HEK293 (cell line): ENCODE measurements at regions of chr6 and their contacts with region 1.

Region 1: DNA sequence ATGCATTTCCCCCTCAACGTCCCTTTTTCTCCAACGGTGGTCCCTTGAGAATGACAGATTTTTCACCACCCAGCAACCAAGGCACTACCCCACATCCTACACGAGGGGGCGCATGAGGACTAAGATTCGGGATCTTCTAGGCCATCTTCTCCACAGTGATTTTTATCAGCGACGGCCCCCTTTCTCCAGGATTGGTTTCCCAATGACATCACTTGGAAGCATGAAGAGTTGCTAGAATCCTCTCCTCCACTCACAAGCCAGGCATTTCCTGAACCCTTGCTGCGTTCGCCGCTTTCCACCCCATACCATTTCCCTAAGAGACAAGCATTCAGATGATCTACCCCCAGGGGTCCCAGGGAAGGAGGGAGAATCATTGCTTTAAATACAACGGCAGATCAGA is 252.0 kb downstream of the HIVEP2 start:
- H3K4me3 ChIP-seq: no peak overlapping the region
- H3K27ac ChIP-seq: no peak overlapping the region
- H3K4me1 ChIP-seq: no peaks in the 10 kb centered on the region
- CTCF ChIP-seq: peak; percentile 81

Region 2: DNA sequence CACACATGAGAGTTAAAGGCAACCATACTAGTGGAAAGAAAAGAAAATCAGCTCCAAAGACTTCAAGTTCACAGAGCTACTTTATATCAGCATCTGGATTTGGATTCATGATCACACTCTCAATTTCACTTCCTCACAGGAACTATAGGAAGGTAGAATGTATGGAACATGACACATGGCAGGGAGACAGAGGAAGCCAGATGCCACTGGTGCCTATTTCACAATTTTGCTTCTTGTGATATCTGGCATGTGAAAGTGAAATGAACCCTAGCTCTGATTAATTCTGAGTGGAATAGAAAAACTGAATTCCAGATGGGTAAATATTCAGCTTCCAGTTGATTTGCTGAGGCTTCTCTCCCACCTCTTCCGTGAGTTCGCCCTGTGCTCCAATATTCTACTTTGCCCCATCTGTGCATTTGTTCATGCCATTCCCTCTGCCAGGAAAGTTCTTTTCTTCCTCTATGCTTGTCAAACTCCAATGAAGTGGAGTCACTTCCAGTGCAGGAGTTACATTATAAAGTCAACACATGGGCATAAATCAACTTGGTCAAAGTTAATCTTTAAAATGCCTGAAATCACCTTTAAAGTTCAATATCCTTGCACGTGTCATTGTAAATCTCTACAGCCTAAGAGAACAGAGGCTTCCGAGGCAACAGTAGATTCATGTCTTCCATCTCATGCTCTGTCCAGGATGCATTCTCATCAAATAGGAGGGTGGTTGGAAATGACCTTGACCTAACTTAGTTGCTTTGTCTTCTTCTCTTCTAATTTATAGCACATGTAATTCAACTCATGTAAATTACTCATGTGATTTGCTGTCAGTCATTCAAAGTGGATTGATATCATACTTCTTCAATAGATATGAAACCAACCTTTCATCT is 23.2 kb before region 1 on chr6:
- CTCF ChIA-PET with region 1: no interaction called
- POLR2A ChIA-PET with region 1: no interaction called
- H3K4me3 ChIP-seq: no peak overlapping the region
- H3K27ac ChIP-seq: no peak overlapping the region
- H3K4me1 ChIP-seq: no peaks in the 10 kb centered on the region
- CTCF ChIP-seq: no peak

Region 3: DNA sequence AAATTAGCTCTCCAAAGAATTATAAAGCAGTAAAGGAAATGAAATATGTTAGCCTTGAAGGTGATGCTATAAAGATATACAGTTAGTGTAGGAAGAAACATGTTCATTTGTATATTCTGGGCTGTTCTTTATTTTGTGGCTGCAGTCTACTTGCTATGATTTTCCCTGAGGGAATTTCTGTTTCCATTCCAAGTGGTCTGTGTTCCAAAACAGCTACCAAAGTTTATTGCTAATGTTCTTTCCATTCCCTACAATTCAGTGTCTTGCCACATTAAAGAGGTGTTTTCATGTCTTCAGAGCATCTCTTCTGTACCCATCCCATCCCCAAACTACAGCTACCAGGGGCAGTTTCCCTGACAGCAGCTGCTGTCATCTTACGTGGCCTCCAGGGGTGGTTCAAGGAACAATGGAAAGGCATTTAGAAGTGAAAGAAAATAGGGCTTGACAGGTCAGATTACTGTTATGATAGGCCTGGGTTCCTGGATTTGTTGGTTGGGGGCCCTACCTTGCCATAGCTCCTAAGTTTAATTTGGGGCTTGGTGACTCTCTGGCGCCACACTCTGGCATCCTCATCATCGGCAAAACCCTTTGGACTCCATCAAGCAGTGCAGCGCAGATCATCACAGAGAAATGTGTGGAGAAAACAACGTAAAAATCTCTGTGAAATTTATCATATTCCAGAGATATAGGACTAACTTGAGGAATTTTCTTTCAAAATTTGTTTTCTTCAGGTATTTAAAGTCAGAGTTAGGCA is 333.9 kb after region 1 on chr6:
- CTCF ChIA-PET with region 1: interaction called, 35 read pairs
- POLR2A ChIA-PET with region 1: no interaction called
- H3K4me3 ChIP-seq: no peak overlapping the region
- H3K27ac ChIP-seq: no peak overlapping the region
- H3K4me1 ChIP-seq: no peaks in the 10 kb centered on the region
- CTCF ChIP-seq: no peak

Region 4: DNA sequence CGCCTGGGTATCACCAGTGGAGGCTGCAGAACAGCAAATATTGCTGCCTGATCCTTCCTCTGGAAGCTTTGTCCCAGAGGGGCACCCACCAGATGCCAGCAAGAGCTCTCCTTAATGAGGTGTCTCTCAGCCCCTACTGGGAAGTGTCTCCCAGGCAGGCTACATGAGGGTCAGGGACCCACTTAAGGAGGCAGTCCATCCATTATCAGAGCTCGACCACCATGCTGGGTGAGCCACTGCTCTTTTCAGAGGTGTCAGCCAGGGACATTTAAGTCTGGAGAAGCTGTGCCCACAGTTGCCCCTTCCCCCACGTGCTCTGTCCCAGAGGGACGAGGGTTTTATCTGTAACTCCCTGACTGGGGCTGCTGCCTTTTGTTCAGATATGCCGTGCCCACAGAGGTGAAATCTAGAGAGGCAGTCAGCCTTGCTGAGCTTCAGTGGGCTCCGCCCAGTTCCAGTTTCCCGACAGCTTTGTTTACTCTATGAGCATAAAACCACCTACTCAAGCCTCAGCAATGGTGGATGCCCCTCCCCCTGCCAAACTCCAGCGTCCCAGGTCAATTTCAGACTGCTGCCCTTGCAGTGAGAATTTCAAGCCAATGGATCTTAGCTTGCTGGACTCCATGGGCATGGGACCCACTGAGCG is 341.9 kb after region 1 on chr6:
- CTCF ChIA-PET with region 1: interaction called, 10 read pairs
- POLR2A ChIA-PET with region 1: no interaction called
- H3K4me3 ChIP-seq: no peak overlapping the region
- H3K27ac ChIP-seq: no peak overlapping the region
- H3K4me1 ChIP-seq: no peaks in the 10 kb centered on the region
- CTCF ChIP-seq: no peak

Region 5: DNA sequence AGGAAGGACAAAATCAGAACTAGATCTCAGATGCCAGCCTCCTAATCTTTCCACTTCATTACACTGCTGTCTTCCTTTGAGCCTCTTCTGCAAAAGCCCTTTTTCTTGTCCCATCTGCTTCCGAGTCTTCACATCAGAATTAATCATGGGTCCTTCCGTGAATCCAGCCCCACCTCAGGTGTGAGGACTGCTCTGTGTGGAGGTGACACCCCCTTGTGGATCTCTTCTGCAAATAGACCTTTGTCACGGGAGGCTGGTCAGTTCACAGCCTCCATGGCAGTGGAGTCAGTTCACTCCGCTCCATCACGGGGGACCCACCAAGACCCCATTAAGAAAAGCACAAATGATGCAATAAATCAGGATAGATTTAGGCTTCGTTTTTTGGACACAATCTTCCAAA is 586.4 kb after region 1 on chr6:
- CTCF ChIA-PET with region 1: interaction called, 12 read pairs
- POLR2A ChIA-PET with region 1: no interaction called
- H3K4me3 ChIP-seq: no peak overlapping the region
- H3K27ac ChIP-seq: no peak overlapping the region
- H3K4me1 ChIP-seq: no peaks in the 10 kb centered on the region
- CTCF ChIP-seq: peak; percentile 44

Region 6: DNA sequence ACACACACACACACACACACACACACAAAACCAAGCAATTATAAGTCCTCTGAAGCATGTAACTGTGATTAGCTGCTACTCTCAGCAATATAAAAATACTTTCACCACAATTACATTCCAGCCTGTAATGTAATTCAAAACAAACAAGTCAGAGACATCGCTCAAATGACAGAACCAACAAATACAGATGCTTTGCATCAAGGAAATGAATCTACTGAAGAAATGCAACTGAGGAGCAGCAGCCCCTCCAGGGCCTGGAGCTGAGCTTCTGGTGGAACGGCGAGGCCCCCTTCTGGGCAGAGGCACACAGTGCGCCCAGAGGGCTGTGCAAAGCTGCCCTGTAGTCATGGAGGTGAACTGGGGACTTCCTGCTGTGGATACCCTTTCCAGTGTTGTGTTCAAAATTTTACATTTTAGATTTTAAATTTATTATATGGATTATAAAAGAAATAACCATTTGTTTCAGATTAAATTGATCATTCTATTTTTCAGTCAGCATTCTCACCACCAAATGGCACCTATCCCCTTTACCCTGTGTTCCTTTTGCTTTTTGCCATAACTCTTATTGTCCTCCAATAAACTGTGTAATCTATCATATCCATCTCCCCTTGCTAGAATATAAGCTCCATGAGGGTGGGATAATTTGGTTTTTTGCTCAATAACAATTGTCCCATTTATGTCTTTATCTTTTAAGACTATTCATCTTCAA is 734.3 kb after region 1 on chr6:
- CTCF ChIA-PET with region 1: interaction called, 48 read pairs
- POLR2A ChIA-PET with region 1: no interaction called
- H3K4me3 ChIP-seq: no peak overlapping the region
- H3K27ac ChIP-seq: no peak overlapping the region
- H3K4me1 ChIP-seq: no peaks in the 10 kb centered on the region
- CTCF ChIP-seq: peak; percentile 80